ENCODE measurements at regions of chr19 and their contacts with region 1.

Region 1: DNA sequence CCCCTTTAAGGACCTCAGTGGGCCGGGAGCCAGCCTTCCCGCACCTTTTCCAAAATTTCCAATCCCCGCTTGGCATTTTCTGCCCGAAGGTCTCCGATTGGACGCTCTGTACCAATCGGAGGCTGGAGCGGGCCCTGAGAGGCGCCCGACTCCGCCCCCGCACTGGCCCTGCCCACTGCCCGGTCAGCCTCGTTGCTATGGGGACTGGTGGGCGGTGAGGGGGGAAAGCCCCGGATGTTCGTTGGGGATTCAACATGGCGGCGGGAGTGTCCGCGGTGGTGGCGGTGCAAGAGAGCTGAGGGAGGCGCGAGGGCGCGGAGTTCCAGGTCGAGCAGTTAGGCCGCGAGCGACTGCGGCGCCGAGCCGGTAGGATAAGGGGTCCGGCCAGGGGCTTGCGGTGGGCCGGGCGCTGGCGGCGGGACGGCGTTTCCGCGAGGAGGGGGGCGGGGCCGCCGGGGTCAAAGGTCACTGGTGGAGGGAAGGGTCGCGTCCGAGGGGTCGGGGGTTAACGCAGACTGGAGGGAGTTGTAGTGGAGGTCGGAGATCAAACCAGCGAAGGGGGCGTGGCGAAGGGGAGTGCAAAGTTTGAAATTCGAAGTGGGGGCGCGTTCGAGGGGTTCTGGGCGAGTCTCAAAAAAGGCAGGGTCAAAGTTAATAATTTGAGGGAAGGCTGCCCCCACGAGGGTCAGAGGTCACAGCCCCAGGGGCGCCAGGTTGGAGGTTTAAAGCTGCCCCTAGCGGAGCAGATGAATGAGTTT is at the start of gene PAK4:
- DNase-seq: peak; percentile 98
- H3K4me3 ChIP-seq: peak within 1 kb of the TSS; percentile 65 to 84 (median 82)
- H3K27ac ChIP-seq: peak within 1 kb of the TSS; percentile 86 to 96 (median 93)
- H3K4me1 ChIP-seq: peaks cover 16 to 56% (median 44%) of the 10 kb centered on the region in 4 donors
- H3K27me3 ChIP-seq: peaks cover 5% of the 10 kb centered on the region
- CTCF ChIP-seq: peak in 1 of 5 experiments; percentile 19
- EP300 ChIP-seq: no peak
- POLR2A ChIP-seq: peak; percentile 80
- total RNA-seq, gene PAK4: 43.8 to 96.1 (median 63.2) TPM

Region 2: DNA sequence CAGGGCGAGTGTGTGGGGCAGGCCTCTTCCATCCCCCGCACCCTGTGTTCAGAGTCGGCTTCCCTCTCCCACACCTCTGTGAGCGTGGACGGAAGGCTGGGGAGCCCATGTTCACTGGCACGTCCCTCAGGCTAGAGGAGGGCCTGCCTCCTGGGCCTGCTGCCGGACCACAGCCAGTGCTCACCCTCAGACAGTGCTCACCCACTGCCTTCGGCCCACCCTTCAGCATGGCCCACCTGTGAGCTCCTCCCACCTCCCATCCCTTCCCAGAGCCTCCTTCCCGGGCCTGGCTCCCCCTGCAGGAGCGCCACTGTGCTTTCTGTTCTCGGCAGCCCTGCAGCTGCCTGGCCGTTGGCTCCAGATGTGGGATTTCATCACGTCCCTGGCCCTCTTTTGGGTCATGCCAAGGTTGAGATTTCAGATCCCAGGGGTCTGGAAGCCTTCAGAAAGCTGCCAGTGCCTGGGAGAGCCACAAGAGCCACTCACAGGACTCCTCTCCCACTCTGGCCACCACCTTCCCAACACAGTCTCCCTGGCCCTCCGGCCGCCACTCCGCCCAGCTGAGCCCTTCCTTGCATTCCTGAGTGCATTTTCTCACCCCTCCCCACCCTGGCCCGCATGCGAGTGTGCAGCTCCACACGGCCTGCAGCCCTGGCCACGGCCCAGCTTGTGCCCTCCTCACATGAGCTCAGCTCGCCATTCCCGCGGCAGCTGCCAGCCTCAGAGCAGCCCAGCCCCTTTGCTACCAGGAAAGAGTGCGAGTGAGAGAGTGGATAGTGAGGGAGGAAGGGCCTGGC is 406.8 kb before region 1 on chr19:
- in situ Hi-C with region 1: no loop called
- intact Hi-C with region 1: loop called (anchors 5 kb)
- DNase-seq: no peak
- H3K4me3 ChIP-seq: no peak overlapping the region
- H3K27ac ChIP-seq: peak overlapping the region; percentile 52 to 80 (median 72)
- H3K4me1 ChIP-seq: peaks cover 0 to 5% (median 0%) of the 10 kb centered on the region in 4 donors
- H3K27me3 ChIP-seq: no peaks in the 10 kb centered on the region
- CTCF ChIP-seq: peak in 2 of 5 experiments; percentile 7 to 20
- EP300 ChIP-seq: no peak
- POLR2A ChIP-seq: no peak

Region 3: GRCh38 chr19:39187559-39187957 is 61.8 kb after region 1 on chr19:
- in situ Hi-C with region 1: loop called in 1 of 4 experiments (anchors 5 kb)
- intact Hi-C with region 1: loop called (anchors 2 kb)
- DNase-seq: no peak
- H3K4me3 ChIP-seq: no peak overlapping the region
- H3K27ac ChIP-seq: no peak overlapping the region
- H3K4me1 ChIP-seq: no peaks in the 10 kb centered on the region
- H3K27me3 ChIP-seq: peaks cover 26% of the 10 kb centered on the region
- CTCF ChIP-seq: peak in 1 of 5 experiments; percentile 21
- EP300 ChIP-seq: no peak
- POLR2A ChIP-seq: no peak

Region 4: GRCh38 chr19:39328046-39328705 is 202.4 kb after region 1 on chr19:
- in situ Hi-C with region 1: loop called in 2 of 4 experiments (anchors 5 to 10 kb)
- intact Hi-C with region 1: loop called (anchors 5 kb)
- DNase-seq: peak; percentile 87
- H3K4me3 ChIP-seq: no peak overlapping the region
- H3K27ac ChIP-seq: no peak overlapping the region
- H3K4me1 ChIP-seq: peaks cover 0 to 5% (median 0%) of the 10 kb centered on the region in 4 donors
- H3K27me3 ChIP-seq: no peaks in the 10 kb centered on the region
- CTCF ChIP-seq: peak; percentile 94 to 98 (median 96)
- EP300 ChIP-seq: no peak
- POLR2A ChIP-seq: no peak

Region 5: DNA sequence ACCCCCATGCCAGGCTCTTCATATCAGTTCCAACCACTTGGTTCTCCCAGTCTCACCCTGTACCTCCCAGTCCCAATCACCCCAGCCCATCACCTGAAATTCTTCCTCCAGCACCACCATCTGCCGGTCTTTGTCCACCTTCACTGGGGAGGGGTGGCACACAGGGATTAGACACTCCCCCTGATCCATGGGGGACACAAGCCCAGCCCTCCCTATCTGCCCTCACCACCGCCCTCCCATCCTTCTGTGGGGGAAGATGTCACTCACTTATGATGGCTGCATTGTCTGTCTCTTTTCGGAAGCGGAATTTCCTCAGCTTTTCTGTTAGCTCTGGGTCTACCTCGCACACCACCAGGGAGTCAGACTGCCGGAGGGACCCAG is 209.4 kb after region 1 on chr19:
- in situ Hi-C with region 1: loop called in 1 of 4 experiments (anchors 10 kb)
- intact Hi-C with region 1: no loop called
- DNase-seq: no peak
- H3K4me3 ChIP-seq: peak overlapping the region; percentile 15 to 52 (median 26)
- H3K27ac ChIP-seq: peak overlapping the region; percentile 74 to 83 (median 79)
- H3K4me1 ChIP-seq: peaks cover 0 to 4% (median 0%) of the 10 kb centered on the region in 4 donors
- H3K27me3 ChIP-seq: no peaks in the 10 kb centered on the region
- CTCF ChIP-seq: no peak
- EP300 ChIP-seq: no peak
- POLR2A ChIP-seq: no peak